ENCODE measurements at regions of chr11 and their contacts with region 1.

Region 1: GRCh38 chr11:9015677-9016076 is 11.9 kb upstream of the NRIP3 start:
- DNase-seq: peak; percentile 76
- H3K4me3 ChIP-seq: no peak overlapping the region; a peak in 1 of 4 replicates
- H3K27ac ChIP-seq: no peak overlapping the region
- H3K4me1 ChIP-seq: peaks cover 0 to 2% of the 10 kb centered on the region in 2 experiments; a peak in 2 of 4 replicates
- H3K27me3 ChIP-seq: no peaks in the 10 kb centered on the region
- CTCF ChIP-seq: peak; percentile 75
- EP300 ChIP-seq: no peak
- RAD21 ChIP-seq: peak; percentile 79

Region 2: DNA sequence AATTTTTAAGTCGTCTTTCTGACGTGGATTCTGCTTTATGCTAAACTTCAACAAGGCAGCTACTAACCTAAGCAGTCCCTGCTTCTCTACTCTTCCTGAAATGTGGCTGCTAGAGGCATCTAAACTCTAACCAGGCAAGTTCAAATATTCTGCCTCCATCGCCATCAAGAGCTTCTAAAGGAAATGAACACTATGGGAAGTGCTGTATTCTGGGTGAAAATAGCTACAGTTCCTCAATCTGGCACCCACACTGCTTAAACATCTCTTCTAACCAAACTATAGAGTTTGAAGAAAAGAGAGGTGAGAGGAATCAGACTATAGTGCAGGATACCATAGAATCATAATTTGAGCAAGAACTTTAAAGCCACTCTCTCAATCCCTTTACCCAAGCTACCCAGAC is 18.2 kb before region 1 on chr11:
- CTCF ChIA-PET with region 1: interaction called, 13 read pairs
- POLR2A ChIA-PET with region 1: no interaction called
- DNase-seq: no peak
- H3K4me3 ChIP-seq: no peak overlapping the region
- H3K27ac ChIP-seq: no peak overlapping the region
- H3K4me1 ChIP-seq: no peaks in the 10 kb centered on the region
- H3K27me3 ChIP-seq: no peaks in the 10 kb centered on the region
- CTCF ChIP-seq: no peak
- EP300 ChIP-seq: no peak
- RAD21 ChIP-seq: no peak

Region 3: GRCh38 chr11:9037046-9037780 is 21.5 kb after region 1 on chr11:
- CTCF ChIA-PET with region 1: interaction called, 10 read pairs
- POLR2A ChIA-PET with region 1: no interaction called
- DNase-seq: no peak
- H3K4me3 ChIP-seq: no peak overlapping the region
- H3K27ac ChIP-seq: no peak overlapping the region
- H3K4me1 ChIP-seq: no peaks in the 10 kb centered on the region
- H3K27me3 ChIP-seq: no peaks in the 10 kb centered on the region
- CTCF ChIP-seq: no peak
- EP300 ChIP-seq: no peak
- RAD21 ChIP-seq: no peak

Region 4: GRCh38 chr11:9060700-9061111 is 45.0 kb after region 1 on chr11:
- CTCF ChIA-PET with region 1: interaction called, 13 read pairs
- POLR2A ChIA-PET with region 1: no interaction called
- DNase-seq: no peak
- H3K4me3 ChIP-seq: no peak overlapping the region
- H3K27ac ChIP-seq: no peak overlapping the region
- H3K4me1 ChIP-seq: peaks cover 0 to 4% of the 10 kb centered on the region in 2 experiments; a peak in 1 of 4 replicates
- H3K27me3 ChIP-seq: no peaks in the 10 kb centered on the region
- CTCF ChIP-seq: peak; percentile 18; the same call in 1 of the 2 replicates
- EP300 ChIP-seq: no peak
- RAD21 ChIP-seq: no peak

Region 5: GRCh38 chr11:9130297-9130696 is 114.6 kb after region 1 on chr11:
- CTCF ChIA-PET with region 1: interaction called, 205 read pairs
- POLR2A ChIA-PET with region 1: no interaction called
- DNase-seq: no peak
- H3K4me3 ChIP-seq: no peak overlapping the region
- H3K27ac ChIP-seq: no peak overlapping the region
- H3K4me1 ChIP-seq: no peaks in the 10 kb centered on the region
- H3K27me3 ChIP-seq: no peaks in the 10 kb centered on the region
- CTCF ChIP-seq: no peak
- EP300 ChIP-seq: no peak
- RAD21 ChIP-seq: no peak

Region 6: DNA sequence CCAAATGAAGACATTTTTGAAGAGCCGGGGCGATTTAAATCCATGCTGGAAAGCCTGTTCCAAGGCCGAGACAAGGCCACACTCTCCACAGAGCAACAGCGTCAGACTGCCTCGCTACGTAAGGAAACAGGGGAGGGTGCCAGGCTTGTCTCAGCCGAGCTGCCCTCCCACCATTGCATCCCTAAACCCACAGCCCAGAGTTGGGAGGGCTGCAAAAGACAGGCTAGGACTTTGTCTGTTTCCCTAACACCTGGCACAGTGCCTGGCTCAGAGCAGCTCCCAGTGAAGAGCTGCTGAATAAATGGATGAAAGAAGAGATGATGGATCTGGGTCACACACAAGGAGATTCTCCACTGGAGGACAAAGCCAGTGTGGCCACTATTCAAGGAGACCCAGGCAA is 127.1 kb after region 1 on chr11:
- CTCF ChIA-PET with region 1: interaction called, 205 read pairs
- POLR2A ChIA-PET with region 1: interaction called, 7 read pairs
- DNase-seq: no peak
- H3K4me3 ChIP-seq: no peak overlapping the region
- H3K27ac ChIP-seq: no peak overlapping the region
- H3K4me1 ChIP-seq: peaks cover 5 to 24% of the 10 kb centered on the region in 2 experiments; a peak in 3 of 4 replicates
- H3K27me3 ChIP-seq: no peaks in the 10 kb centered on the region
- CTCF ChIP-seq: no peak
- EP300 ChIP-seq: no peak
- RAD21 ChIP-seq: no peak